Left ventricle myocardium superior (tissue), 1 donor: ENCODE measurements at regions of chr9 and their contacts with region 1.

Region 1: GRCh38 chr9:70111042-70111602 is 67.5 kb downstream of the MAMDC2 start:
- DNase-seq: peak; percentile 91
- ATAC-seq: peak; percentile 88

Region 2: DNA sequence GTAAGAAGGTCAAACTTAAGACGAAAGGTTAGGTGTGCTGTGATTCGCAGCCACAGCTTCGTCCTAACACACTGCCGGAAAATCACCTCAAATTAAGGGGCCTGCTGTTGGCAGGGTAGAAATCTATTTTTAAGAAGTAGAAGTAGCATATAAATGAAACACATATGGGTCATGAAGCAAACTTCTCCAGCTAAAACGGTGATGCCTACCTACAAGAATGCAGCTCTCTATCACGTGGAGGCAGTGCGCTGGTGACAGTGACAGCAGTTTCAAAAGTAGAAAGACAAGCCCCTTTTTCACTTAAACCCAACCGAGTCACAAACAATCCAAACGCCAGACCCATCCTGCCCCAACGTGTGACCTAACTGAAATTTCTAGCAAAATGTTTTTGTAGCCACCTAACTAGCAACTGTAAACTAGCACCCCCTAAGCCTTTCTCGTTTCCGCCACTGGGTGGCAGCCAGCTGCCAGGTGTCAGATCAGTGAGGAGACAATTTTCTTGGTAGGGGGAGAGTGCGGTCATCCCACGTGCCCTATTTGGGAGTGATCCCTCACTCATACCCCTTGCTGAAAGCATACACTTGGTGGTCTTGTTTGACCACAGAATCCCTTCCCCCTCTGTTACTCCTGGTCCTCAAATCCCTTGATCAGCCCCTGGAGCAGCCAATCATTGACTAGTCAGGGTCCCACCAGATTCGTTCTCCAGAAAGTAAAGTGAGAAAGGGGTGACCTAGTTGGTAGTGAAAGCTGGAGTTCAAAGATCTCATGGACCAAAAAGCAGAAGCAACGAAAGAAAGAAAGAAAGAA is 139.3 kb before region 1 on chr9:
- intact Hi-C with region 1: loop called (anchors 2 kb)
- DNase-seq: peak; percentile 83
- ATAC-seq: peak; percentile 83